Activated T-helper 1 cell treated with anti-CD3 and anti-CD28 coated beads, Interleukin-12 subunit alpha, Interleukin-12 subunit beta, Interleukin-2, Interleukin-4 antibody, amounts not matched to agents 30 ng/mL and 10 ng/mL and 1 ng/mL, durations not matched to agents 14 hours and 24 hours and 36 hours (primary cell): ENCODE measurements at regions of chr6 and their contacts with region 1.

Region 1: DNA sequence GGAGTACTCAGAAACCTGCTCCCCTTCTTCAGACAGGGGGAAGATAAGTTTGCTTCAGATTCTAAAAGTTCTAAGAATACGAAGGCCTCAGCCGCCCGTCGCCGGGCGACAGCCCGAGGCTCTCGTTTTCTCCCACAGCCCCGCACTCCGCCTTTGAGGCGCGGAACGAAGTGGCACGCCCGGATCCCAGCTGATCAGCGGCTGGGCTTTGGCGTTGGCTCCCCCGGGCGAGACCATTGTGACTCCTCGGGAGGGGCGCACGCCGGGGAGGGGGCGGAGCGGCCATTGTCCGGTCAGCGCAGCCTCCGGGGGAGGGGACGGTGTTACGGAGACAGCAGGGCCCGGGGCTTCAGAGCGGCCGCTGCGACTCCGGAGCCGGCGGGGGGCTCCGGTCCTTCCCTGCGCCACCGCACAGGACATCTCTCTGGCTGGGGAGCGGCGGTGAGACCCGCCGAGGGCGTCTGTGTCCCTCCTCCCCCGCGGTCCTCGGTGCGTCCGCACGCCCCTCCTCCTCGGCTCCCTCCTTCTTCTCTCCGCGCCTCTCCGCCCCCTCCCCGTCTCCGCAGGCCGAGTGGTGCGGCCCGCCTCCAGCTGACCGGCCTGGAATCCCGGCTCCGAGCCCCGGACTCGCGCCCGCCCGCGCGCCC is at the start of gene ZFAND3:
- DNase-seq: peak; percentile 93
- H3K4me3 Mint-ChIP-seq: peak within 1 kb of the TSS; percentile 95
- H3K27ac Mint-ChIP-seq: peak within 1 kb of the TSS; percentile 97
- H3K4me1 Mint-ChIP-seq: peaks cover 52% of the 10 kb centered on the region
- H3K27me3 Mint-ChIP-seq: peaks cover 9% of the 10 kb centered on the region
- total RNA-seq, gene ZFAND3: 36.9 and 44.1 TPM in 2 replicates

Region 2: DNA sequence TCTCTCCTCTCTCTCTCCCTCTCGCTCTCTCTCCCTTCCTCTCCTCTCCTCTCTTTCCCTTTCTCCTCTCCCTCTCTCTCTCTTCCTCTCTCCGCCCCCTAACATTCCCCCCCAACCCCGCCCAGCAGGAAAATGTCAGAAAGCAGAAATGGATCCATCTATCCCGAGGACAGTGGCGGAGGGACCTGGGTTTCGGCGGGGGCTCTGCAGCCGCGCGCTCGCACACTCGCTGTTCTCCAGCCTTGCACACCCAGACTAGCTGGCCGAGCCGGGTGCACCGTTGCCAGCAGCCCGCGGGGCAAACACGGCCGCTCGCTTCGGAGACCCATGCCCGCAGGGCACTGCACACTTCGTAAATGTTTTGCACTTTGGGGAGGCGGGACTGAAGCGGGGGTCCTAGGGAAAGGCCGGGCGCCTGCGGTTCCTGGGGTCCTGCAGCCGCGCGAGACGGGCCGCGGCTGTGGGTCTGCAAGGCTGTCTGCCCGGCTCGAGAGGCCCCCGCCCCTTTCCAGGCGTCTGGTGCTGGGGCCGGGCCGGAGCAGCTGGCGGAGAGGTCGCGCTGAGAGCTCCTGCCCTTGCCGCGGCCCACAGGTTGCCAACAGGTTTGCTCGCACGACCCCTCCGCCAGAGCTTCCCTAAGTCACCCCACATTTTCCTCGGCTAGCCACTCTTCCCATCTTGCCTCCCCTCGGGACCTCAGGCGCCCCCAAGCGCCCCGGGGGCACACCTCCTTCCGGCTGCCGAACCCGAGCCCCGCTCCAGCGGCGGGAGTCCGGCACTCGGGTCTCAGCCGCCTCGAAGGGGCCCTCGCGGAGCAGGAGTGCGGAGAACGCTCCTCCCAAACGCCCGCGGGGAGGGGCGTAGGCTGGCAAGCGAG is 120.8 kb before region 1 on chr6:
- intact Hi-C with region 1: loop called (anchors 5 kb)
- DNase-seq: peak; percentile 58
- H3K4me3 Mint-ChIP-seq: peak overlapping the region; percentile 91
- H3K27ac Mint-ChIP-seq: peak overlapping the region; percentile 91
- H3K4me1 Mint-ChIP-seq: peaks cover 28% of the 10 kb centered on the region
- H3K27me3 Mint-ChIP-seq: peaks cover 34% of the 10 kb centered on the region

Region 3: DNA sequence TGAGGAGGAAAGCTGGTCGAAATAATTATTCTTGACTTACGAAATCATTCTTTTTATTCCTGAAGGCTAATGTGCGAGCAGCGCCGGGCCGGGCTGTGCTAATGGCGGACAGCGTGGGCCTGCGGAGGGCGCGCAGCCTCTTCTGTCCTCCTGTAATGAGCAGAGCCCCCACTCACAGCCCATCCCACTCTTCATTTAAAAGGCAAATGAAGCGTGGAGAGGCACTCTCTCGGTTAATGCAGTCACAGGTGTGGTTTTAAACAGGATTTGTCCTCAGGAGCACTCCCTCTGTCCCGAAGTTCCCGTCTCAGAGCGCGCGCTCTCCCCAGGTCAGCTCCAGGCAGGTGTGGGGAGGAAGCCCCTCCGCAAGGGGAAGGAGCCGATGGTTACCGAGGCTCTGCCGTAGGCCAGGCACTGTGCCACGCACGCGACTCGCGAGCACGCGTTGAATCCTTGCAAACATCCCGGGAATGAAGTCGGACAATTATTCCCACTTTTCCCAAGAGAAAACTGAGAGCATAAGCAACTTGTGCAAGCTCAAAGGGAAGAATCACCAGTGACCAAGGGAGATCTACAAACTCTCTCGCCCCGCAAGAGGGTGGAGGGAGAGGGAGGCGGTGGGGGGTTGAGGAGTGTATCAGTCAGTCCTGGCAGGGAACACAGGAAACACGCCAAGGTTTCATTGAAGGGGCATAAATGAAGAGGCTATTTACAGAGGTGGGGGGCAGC is 35.3 kb before region 1 on chr6:
- intact Hi-C with region 1: no loop called
- DNase-seq: no peak
- H3K4me3 Mint-ChIP-seq: peak overlapping the region; percentile 72
- H3K27ac Mint-ChIP-seq: no peak overlapping the region
- H3K4me1 Mint-ChIP-seq: peaks cover 18% of the 10 kb centered on the region
- H3K27me3 Mint-ChIP-seq: peaks cover 23% of the 10 kb centered on the region

Region 4: DNA sequence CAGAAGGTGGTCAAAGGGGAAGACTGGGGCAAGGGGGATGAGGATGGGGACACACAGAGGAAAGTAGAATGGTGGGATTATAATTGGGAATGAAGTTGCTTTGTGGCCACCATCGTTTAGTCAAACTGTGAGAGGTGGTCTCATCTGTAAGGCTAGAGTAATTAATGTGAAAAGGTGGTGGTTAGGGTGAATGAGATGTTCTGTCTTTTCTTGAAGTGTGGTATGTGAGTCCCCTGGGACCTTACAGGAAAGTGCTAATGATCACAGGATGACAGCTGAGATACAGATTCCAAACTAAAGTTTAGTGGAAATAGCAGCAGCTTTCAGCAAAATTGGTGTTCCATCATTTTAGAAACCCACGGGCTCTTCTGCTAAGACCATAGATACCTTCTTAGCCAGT is 10.9 kb after region 1 on chr6:
- intact Hi-C with region 1: no loop called
- DNase-seq: no peak
- H3K4me3 Mint-ChIP-seq: no peak overlapping the region
- H3K27ac Mint-ChIP-seq: no peak overlapping the region
- H3K4me1 Mint-ChIP-seq: peaks cover 55% of the 10 kb centered on the region
- H3K27me3 Mint-ChIP-seq: no peaks in the 10 kb centered on the region

Region 5: DNA sequence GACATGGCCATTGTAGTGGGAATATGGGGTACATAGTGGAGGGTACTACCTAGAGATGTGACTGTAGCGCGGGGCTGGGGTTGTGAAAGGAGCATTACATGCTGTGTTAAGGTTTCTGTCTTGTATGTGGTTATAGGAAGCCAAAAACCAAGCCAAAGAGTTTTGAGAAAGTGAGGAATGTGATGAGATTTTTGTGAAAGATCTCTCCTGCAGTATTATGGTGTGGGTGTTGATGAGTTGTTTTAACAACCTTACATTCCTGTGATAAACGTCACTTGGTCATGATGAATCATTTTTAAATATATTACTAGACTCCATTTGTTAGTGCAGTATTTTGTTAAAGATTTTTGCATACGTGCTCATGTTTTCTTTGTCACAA is 49.1 kb after region 1 on chr6:
- intact Hi-C with region 1: loop called (anchors 2 kb)
- DNase-seq: no peak
- H3K4me3 Mint-ChIP-seq: no peak overlapping the region
- H3K27ac Mint-ChIP-seq: peak overlapping the region; percentile 49
- H3K4me1 Mint-ChIP-seq: peaks cover 42% of the 10 kb centered on the region
- H3K27me3 Mint-ChIP-seq: no peaks in the 10 kb centered on the region